Posterior vena cava (tissue), 2 donors: ENCODE measurements at regions of chr3 and their contacts with region 1.

Region 1: DNA sequence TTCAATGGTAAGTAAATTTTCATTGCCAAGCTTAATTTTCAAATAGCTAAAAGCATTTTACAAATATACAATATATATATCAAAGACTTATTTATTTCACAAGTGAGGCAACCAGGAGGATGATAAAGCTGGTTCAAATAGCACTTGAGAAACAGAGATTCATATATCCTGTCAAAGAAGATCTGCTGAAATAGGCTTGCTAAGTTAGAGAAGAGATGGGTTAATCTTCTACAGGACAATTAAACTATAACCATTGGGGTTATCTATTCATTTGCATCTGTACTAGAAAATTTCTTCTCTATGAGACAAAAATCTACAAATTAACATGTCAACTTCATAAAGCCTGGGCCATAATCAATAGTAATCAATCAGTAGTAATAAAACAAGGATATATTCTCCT is 637.7 kb upstream of the UBE2E2 start:
- DNase-seq: no peak

Region 2: DNA sequence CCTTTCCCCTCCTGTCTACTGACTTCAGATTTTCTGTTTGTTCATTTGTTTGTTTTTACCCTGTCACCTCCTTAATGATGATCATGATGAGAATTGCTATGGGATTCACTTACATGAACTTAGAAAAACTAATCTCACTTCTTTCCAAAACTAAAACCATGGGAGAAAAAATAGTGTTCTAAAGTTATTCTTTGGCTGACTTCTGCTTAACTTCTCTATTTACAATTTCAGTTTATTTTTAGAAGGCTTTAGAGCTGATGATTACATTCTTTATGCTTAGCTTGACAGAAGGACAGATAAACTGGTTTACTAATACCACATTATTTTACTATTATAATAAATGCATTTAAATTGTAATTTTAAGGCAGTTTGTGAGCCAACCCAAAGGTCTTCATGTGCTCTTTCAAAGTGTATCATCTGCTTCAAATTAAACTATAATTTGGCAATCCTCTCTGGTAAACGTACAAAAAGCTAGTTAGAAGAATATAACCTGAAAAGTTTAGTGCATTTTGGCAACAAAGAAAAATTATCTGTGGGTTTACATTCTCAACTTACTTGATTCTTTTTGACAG is 39.0 kb before region 1 on chr3:
- intact Hi-C with region 1: no loop called
- DNase-seq: no peak

Region 3: DNA sequence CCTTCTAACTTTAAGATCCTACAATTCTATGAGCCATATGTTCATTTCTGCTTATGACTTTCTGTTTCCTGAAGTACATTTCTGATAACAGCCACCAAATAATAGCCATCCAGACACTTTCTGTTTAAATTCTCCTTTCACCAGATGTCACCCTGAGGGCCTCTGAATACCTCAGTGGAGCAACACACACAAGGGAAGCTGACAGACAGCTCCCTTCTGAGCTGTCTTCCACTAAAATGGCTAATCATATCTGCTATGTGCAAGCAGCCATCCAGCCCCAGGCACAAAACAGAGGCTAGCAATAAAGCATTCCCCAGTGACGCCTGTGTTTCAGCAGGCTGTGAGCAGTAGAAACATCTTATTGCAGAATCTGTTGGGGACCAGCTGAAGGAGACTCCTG is 28.9 kb before region 1 on chr3:
- intact Hi-C with region 1: no loop called
- DNase-seq: no peak

Region 4: GRCh38 chr3:22960105-22960984 is 395.0 kb after region 1 on chr3:
- intact Hi-C with region 1: loop called in 1 of 2 experiments (anchors 10 kb)
- DNase-seq: no peak

Region 5: GRCh38 chr3:23533996-23534395 is 968.6 kb after region 1 on chr3:
- intact Hi-C with region 1: loop called in 1 of 2 experiments (anchors 5 kb)
- DNase-seq: no peak